ENCODE measurements at regions of chr1 and their contacts with region 1.

Region 1: DNA sequence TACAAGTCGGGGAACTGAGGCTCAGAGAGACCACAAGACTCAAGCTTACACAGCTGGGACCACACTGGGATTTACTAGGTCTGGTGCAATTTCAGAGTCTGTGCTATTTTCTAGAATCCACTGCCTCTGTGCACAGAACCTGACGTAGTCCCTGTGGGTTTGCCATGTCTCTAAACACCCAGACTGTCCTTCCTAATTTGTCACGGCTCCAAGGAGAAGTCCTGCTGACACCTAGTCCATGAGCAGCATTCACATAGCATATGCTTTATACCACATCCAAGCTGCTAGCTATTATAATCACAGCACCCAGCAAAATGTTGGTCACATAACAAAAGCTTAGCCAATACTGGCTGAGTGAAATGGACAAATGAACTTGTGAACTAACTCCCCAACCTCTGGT is 79.0 kb upstream of the HMGB4 start:
- DNase-seq: no peak
- H3K4me3 ChIP-seq: no peak overlapping the region
- H3K27ac ChIP-seq: no peak overlapping the region
- H3K4me1 ChIP-seq: no peaks in the 10 kb centered on the region
- H3K27me3 ChIP-seq: no peaks in the 10 kb centered on the region
- CTCF ChIP-seq: no peak

Region 2: DNA sequence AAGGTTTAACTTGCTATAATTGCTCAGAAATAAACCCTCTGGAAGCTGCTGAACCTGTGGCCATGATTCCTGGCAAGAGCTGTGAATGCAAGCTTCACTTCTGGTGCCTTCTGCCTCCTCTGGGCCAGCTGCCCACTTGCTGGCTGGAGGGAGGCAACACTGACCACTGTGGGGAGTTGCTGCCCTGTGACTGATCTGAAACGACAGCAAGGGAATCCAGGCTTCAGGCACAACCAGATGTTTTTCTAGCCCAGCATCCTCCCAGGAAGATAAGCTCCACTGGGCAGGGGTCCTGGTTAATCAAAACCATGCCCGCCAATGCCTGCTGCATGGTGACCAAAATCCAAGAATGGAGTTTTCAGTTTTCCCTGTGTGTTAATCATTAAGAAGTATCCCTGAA is 101.0 kb before region 1 on chr1:
- CTCF ChIA-PET with region 1: no interaction called
- dilution Hi-C with region 1: loop called (anchors 5 kb)
- in situ Hi-C with region 1: no loop called
- intact Hi-C with region 1: no loop called
- DNase-seq: no peak
- H3K4me3 ChIP-seq: no peak overlapping the region
- H3K27ac ChIP-seq: no peak overlapping the region
- H3K4me1 ChIP-seq: no peaks in the 10 kb centered on the region
- H3K27me3 ChIP-seq: no peaks in the 10 kb centered on the region
- CTCF ChIP-seq: no peak

Measured in mammary epithelial cell (primary cell).